Right ventricle myocardium superior (tissue), 1 donor: ENCODE measurements at regions of chr12 and their contacts with region 1.

Region 1: DNA sequence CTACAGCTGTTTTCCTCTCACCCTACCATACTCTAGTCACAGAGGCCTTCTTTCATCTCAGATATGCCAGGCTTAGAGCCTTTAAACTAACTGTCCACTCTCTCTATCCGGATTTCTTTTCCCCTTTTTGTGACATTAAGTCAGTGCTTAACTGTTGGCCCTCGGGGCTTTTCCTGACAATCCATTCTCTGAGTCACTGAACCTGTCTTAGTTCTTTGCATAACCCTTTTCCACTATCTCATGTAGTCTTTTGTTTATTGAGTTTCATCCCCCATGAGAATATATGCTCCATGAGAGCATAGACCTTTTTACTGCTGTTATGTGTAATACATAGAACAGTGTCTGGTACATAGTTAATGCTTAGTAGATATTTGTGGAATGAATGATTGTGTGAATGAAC is 68.7 kb downstream of the PLEKHA5 start:
- DNase-seq: no peak
- ATAC-seq: no peak

Region 2: GRCh38 chr12:19277707-19278106 is 79.4 kb after region 1 on chr12:
- intact Hi-C with region 1: loop called (anchors 5 kb)
- DNase-seq: no peak
- ATAC-seq: no peak